ENCODE measurements at regions of chr16 and their contacts with region 1.

Region 1: GRCh38 chr16:74984535-74985296 is at the start of gene WDR59:
- DNase-seq: peak; percentile 98
- ATAC-seq: peak; percentile 99
- H3K4me3 ChIP-seq: peak within 1 kb of the TSS; percentile 56 to 98 (median 83)
- H3K4me3 Mint-ChIP-seq: peak within 1 kb of the TSS; percentile 96
- H3K27ac ChIP-seq: peak within 1 kb of the TSS; percentile 47 to 72
- H3K27ac Mint-ChIP-seq: peak within 1 kb of the TSS; percentile 92
- H3K4me1 ChIP-seq: peaks cover 0 to 15% of the 10 kb centered on the region in 2 donors
- H3K4me1 Mint-ChIP-seq: peaks cover 12% of the 10 kb centered on the region
- H3K27me3 ChIP-seq: no peaks in the 10 kb centered on the region
- H3K27me3 Mint-ChIP-seq: no peaks in the 10 kb centered on the region
- CTCF ChIP-seq: no peak
- total RNA-seq, gene WDR59: 127 and 136 TPM in 2 replicates

Region 2: GRCh38 chr16:74296432-74297144 is 688.1 kb before region 1 on chr16 and contains the start of gene PSMD7:
- CTCF ChIA-PET with region 1: no interaction called
- POLR2A ChIA-PET with region 1: no interaction called
- intact Hi-C with region 1: loop called (anchors 5 kb)
- DNase-seq: peak; percentile 94
- ATAC-seq: peak; percentile 90
- H3K4me3 ChIP-seq: peak within 1 kb of the TSS; percentile 74 to 94 (median 93)
- H3K4me3 Mint-ChIP-seq: peak within 1 kb of the TSS; percentile 95
- H3K27ac ChIP-seq: peak within 1 kb of the TSS; percentile 87 to 96
- H3K27ac Mint-ChIP-seq: peak within 1 kb of the TSS; percentile 96
- H3K4me1 ChIP-seq: peaks cover 22 to 26% of the 10 kb centered on the region in 2 donors
- H3K4me1 Mint-ChIP-seq: peaks cover 24% of the 10 kb centered on the region
- H3K27me3 ChIP-seq: no peaks in the 10 kb centered on the region
- H3K27me3 Mint-ChIP-seq: no peaks in the 10 kb centered on the region
- CTCF ChIP-seq: no peak
- total RNA-seq, gene PSMD7: 59.9 and 60.8 TPM in 2 replicates

Region 3: GRCh38 chr16:74666425-74667254 is 318.1 kb before region 1 on chr16 and contains the start of gene RFWD3:
- CTCF ChIA-PET with region 1: interaction called, 5 read pairs
- POLR2A ChIA-PET with region 1: no interaction called
- intact Hi-C with region 1: loop called (anchors 10 kb)
- DNase-seq: peak; percentile 98
- ATAC-seq: peak; percentile 100
- H3K4me3 ChIP-seq: peak within 1 kb of the TSS; percentile 80 to 99 (median 81)
- H3K4me3 Mint-ChIP-seq: peak within 1 kb of the TSS; percentile 93
- H3K27ac ChIP-seq: peak within 1 kb of the TSS; percentile 64 to 89
- H3K27ac Mint-ChIP-seq: peak within 1 kb of the TSS; percentile 92
- H3K4me1 ChIP-seq: peaks cover 10 to 14% of the 10 kb centered on the region in 2 donors
- H3K4me1 Mint-ChIP-seq: peaks cover 38% of the 10 kb centered on the region
- H3K27me3 ChIP-seq: no peaks in the 10 kb centered on the region
- H3K27me3 Mint-ChIP-seq: no peaks in the 10 kb centered on the region
- CTCF ChIP-seq: no peak
- total RNA-seq, gene RFWD3: 63.3 and 65.0 TPM in 2 replicates

Region 4: DNA sequence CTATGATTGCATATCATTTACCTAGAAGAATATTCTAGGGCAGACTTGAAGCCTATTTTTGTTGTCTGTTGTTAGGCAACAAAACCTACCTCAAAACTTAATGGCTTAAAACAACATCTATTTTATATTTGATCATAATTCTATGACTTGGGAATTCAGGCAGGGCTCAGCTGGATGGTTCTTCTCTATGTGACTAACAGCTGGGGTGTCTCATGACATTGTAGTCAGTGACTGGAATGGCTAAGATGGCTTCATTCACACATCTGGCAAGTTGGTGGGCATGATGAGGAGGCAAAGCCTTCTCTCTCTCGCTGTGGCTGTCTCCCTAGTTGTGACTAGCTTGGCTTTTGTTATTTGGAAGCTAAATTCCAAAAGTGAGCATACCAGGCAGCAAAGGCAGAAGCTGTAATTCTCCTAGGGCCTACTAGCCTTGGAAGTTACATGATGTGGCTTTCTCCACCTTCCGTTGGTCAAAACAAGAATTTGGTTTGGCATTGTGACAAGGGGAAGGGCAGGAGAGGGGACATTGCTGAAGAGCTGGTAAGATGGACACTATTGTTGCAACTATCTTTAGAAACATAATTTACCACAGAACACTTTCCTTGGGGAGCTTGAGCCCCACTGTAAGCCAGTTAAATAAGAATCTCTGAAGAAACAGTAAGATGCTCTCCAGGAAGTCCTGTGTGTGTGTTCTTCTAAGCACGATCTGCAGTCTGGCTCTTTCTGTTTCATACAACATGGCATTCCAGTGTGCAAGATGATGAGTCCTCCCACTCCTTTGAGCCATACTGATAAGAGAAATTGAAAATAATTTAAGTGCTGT is 53.5 kb after region 1 on chr16:
- CTCF ChIA-PET with region 1: no interaction called
- POLR2A ChIA-PET with region 1: no interaction called
- intact Hi-C with region 1: no loop called
- DNase-seq: no peak
- ATAC-seq: no peak
- H3K4me3 ChIP-seq: no peak overlapping the region
- H3K4me3 Mint-ChIP-seq: no peak overlapping the region
- H3K27ac ChIP-seq: no peak overlapping the region
- H3K27ac Mint-ChIP-seq: no peak overlapping the region
- H3K4me1 ChIP-seq: no peaks in the 10 kb centered on the region
- H3K4me1 Mint-ChIP-seq: peaks cover 6% of the 10 kb centered on the region
- H3K27me3 ChIP-seq: no peaks in the 10 kb centered on the region
- H3K27me3 Mint-ChIP-seq: peaks cover 4% of the 10 kb centered on the region
- CTCF ChIP-seq: no peak

Region 5: DNA sequence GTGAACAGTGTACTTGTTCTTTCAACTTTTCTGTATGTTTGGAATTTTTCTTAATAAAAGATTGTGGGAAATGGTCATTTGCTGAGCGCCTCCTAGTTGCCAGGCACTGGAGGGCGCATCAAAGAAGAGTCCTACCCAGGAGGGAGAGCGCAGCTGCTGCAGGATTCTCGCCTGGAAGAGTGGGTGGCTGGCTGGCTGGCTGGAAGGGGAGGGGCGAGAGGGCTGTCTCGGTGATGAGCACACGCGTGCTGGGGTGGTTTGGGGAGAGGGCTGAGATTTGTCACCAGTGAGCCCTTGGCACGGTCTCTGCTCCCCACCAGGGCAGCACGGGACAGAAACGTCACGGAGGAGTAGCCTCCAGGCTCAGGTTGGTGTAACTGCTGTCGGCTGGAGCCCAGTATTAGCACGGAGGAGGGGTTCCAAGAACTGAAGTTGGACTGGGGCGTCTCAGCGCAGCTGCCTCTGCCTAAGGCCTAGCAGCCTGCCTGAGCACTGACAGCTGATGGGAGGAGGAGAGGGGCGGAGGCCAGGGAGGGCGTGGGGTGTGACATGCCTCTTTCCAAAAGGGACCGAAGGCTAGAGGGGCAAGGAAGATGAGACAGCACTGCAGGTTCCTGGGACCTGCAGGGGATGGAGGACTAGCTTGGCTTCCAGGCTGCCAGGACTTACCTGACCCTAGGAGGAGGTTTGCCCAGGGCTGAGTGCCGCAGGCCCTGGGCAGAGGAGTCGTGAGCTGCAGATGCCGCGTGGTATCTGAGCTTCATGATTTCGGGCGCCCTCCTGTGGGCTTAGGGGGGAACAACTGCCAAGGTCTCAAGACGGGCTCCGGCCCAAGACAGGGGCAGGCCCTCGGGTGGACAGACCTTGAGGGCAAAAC is 126.2 kb after region 1 on chr16:
- CTCF ChIA-PET with region 1: interaction called, 14 read pairs
- POLR2A ChIA-PET with region 1: no interaction called
- intact Hi-C with region 1: no loop called
- DNase-seq: peak; percentile 87
- ATAC-seq: peak; percentile 85
- H3K4me3 ChIP-seq: peak overlapping the region in 2 of 5 experiments; percentile 4 to 22
- H3K4me3 Mint-ChIP-seq: peak overlapping the region; percentile 73
- H3K27ac ChIP-seq: no peak overlapping the region
- H3K27ac Mint-ChIP-seq: peak overlapping the region; percentile 2
- H3K4me1 ChIP-seq: peaks cover 34 to 38% of the 10 kb centered on the region in 2 donors
- H3K4me1 Mint-ChIP-seq: peaks cover 33% of the 10 kb centered on the region
- H3K27me3 ChIP-seq: peaks cover 0 to 79% (median 34%) of the 10 kb centered on the region in 4 experiments
- H3K27me3 Mint-ChIP-seq: peaks cover 50% of the 10 kb centered on the region
- CTCF ChIP-seq: peak; percentile 88

Region 6: DNA sequence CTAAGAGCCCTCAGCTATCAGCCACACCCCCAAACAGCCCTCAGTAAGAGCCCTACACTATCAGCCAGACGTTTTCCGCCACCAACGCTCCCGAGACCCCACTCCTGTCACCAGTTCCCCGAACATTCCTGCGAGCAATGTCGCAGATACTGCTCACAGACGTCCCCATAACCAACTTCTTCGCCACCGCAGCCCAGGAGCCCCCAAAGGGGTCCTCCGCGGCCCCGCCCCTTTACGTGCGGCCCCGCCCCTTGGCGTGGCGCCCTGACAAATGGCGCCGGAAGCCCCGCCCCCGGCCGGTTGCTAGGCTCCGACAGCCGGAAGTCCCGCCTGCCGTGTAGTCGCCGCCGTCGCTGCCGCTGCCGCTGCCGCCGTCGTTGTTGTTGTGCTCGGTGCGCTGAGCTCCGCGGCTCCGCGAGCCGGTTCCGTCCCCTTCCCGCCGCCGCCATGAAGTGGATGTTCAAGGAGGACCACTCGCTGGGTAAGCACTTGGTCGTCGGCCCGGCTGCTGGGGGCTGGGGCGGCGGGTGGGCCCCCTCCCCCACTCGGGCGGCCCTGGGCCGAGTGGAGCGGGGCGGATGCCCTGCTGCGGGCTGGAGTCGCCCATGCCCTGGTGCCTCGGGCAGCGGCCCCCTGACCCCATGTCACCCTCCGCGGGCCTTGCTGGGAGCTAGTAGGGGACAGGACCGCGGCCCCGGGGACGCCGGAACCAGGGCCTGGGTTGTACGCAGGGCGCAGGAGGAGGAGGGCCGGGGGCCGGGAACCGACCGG is 581.5 kb after region 1 on chr16 and contains the start of gene GABARAPL2:
- CTCF ChIA-PET with region 1: no interaction called
- POLR2A ChIA-PET with region 1: no interaction called
- intact Hi-C with region 1: loop called (anchors 2 kb)
- DNase-seq: peak; percentile 97
- ATAC-seq: peak; percentile 70
- H3K4me3 ChIP-seq: peak within 1 kb of the TSS; percentile 75 to 96 (median 95)
- H3K4me3 Mint-ChIP-seq: peak within 1 kb of the TSS; percentile 100
- H3K27ac ChIP-seq: peak within 1 kb of the TSS; percentile 96 to 99
- H3K27ac Mint-ChIP-seq: peak within 1 kb of the TSS; percentile 97
- H3K4me1 ChIP-seq: peaks cover 44 to 61% of the 10 kb centered on the region in 2 donors
- H3K4me1 Mint-ChIP-seq: peaks cover 53% of the 10 kb centered on the region
- H3K27me3 ChIP-seq: no peaks in the 10 kb centered on the region
- H3K27me3 Mint-ChIP-seq: no peaks in the 10 kb centered on the region
- CTCF ChIP-seq: no peak
- total RNA-seq, gene GABARAPL2: 84.8 and 84.9 TPM in 2 replicates

Measured in B cell (primary cell).